ENCODE measurements at regions of chr22 and their contacts with region 1.

Region 1: DNA sequence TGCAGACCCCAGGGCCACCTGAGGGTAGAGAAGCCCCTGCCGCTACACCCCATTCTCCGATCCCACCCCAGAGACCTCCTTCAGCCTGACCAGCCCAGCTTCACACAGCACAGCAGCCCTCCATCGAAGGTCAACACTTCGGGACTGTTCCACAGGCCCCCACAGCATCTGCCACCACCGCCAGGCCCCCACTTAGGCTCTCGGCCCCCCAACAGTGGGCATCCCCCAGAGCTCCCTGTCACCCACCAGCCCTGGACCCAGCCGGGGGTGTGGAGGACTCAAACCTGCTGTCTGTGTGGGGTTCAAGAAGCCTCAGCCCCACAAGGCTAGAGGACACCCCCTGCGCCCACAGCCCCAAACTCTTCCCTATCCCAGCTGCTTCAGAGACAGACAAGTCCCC is 6.2 kb downstream of the SBF1 start:
- DNase-seq: no peak
- ATAC-seq: no peak
- H3K4me3 ChIP-seq: no peak overlapping the region
- H3K27ac ChIP-seq: no peak overlapping the region
- H3K4me1 ChIP-seq: peaks cover 21% of the 10 kb centered on the region
- H3K27me3 ChIP-seq: no peaks in the 10 kb centered on the region
- CTCF ChIP-seq: no peak
- POLR2A ChIP-seq: no peak
- RAD21 ChIP-seq: no peak

Region 2: GRCh38 chr22:50444663-50445062 is 24.0 kb before region 1 on chr22:
- CTCF ChIA-PET with region 1: no interaction called
- POLR2A ChIA-PET with region 1: no interaction called
- dilution Hi-C with region 1: no loop called
- in situ Hi-C with region 1: no loop called
- intact Hi-C with region 1: no loop called
- DNase-seq: peak; percentile 78
- ATAC-seq: peak; percentile 54
- H3K4me3 ChIP-seq: no peak overlapping the region
- H3K27ac ChIP-seq: no peak overlapping the region
- H3K4me1 ChIP-seq: no peaks in the 10 kb centered on the region
- H3K27me3 ChIP-seq: no peaks in the 10 kb centered on the region
- CTCF ChIP-seq: no peak
- POLR2A ChIP-seq: no peak
- RAD21 ChIP-seq: no peak

Region 3: DNA sequence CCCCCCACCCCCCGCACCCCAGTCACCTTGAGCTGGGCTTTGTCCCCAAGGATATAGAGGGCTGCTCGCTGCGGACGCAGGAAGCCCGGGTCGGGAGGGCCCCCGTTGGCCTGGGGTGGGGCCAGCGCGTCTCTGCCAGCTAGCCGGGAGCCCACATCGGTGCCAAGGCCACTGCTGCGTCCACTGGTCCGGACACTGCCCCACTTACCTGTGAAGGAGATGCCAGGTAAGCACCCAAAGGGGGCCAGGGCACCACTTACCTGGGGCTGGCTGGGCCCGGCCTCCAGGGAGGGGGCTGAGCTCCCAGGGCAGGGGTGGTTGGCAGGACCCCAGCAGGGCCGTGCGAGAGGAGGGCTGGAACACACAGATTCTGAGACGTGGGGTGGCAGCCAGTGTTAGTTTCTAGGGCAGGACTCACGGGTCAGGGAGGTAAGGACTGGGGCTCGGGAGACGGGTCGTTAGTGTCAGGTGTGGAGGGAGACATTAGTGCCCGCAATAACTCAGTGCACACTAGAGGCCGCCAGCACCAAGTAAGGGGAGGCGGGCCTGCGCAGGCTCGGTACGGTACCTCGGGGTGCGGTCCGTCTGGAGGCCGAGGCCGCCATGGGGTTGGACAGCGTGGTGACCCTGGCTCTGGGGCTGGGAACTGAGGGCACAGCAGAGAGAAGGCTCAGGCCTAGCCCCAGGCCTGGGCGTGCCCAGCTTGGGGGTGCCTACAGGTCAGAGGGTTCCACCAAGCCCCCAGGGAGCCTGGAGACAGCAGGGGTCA is 12.0 kb before region 1 on chr22:
- CTCF ChIA-PET with region 1: no interaction called
- POLR2A ChIA-PET with region 1: interaction called, 15 read pairs
- dilution Hi-C with region 1: no loop called
- in situ Hi-C with region 1: no loop called
- intact Hi-C with region 1: no loop called
- DNase-seq: no peak
- ATAC-seq: 0 out of 2 replicates have a peak, but pooled peaks have one; percentile 33
- H3K4me3 ChIP-seq: no peak overlapping the region
- H3K27ac ChIP-seq: no peak overlapping the region
- H3K4me1 ChIP-seq: no peaks in the 10 kb centered on the region
- H3K27me3 ChIP-seq: no peaks in the 10 kb centered on the region
- CTCF ChIP-seq: peak; percentile 12; the same call in 1 of the 2 replicates
- POLR2A ChIP-seq: no peak
- RAD21 ChIP-seq: no peak